Heart right ventricle (tissue), 16 donors: ENCODE measurements at regions of chr6 and their contacts with region 1.

Region 1: DNA sequence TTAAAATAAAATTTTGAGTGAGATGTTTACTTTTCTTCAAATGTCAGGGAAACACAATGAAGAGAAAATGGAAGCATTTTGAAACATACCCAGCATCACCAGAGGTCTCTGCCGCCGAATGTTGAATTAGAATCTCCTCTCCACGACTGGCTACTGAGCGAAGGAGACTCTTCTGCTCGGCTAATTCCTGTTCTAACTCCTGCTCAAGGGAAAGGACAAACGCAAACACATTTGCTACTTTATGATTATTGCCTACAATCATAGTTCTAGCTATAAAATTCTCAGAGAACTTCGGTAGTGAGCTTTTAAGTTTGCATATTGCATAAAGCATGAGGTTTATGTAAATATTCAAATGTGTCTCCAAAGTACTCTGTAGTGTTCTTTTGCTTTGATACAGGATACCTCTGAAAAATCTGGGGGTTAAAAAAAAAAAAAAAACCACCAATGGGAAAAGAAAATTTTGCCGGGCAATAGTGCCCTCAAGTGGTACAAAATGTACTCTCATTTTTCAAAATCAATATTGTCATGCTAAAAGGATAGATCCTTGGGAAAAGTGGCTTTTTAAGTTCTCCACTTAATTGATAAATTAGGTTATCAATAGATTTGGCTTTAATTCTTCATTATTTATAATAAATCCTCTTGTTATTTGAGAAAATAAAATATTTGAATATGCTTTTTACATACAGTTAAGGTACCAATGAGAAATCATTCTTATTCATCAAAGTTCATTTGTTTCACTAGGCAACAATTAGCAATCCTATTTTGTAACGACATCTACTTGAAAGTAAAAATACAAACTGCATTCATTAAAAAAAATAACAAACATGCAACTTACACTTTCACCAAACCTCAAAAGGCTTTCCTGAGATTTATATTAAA is 369.0 kb downstream of the SYNE1 start:
- DNase-seq: no peak
- ATAC-seq: no peak
- H3K4me3 ChIP-seq: no peak overlapping the region
- H3K27ac ChIP-seq: peak overlapping the region in 3 of 10 donors; percentile 8 to 41 (median 34)
- H3K4me1 ChIP-seq: peaks cover 14 to 55% (median 41%) of the 10 kb centered on the region in 9 donors
- H3K27me3 ChIP-seq: no peaks in the 10 kb centered on the region
- CTCF ChIP-seq: peak; percentile 31 to 68 (median 60)

Region 2: GRCh38 chr6:151690768-151691562 is 577.2 kb before region 1 on chr6:
- intact Hi-C with region 1: loop called in 2 of 10 experiments (anchors 5 to 10 kb)
- DNase-seq: no peak
- ATAC-seq: peak in 7 of 8 donors; percentile 64 to 78 (median 72)
- H3K4me3 ChIP-seq: peak overlapping the region in 9 of 10 donors; percentile 10 to 47 (median 41)
- H3K27ac ChIP-seq: peak overlapping the region; percentile 18 to 82 (median 69)
- H3K4me1 ChIP-seq: peaks cover 0 to 27% (median 0%) of the 10 kb centered on the region in 9 donors
- H3K27me3 ChIP-seq: peaks cover 0 to 2% (median 0%) of the 10 kb centered on the region in 7 donors
- CTCF ChIP-seq: no peak

Region 3: GRCh38 chr6:151999194-151999593 is 269.0 kb before region 1 on chr6:
- intact Hi-C with region 1: no loop called
- DNase-seq: no peak
- ATAC-seq: no peak
- H3K4me3 ChIP-seq: no peak overlapping the region
- H3K27ac ChIP-seq: no peak overlapping the region
- H3K4me1 ChIP-seq: no peaks in the 10 kb centered on the region
- H3K27me3 ChIP-seq: no peaks in the 10 kb centered on the region
- CTCF ChIP-seq: no peak

Region 4: GRCh38 chr6:152129691-152130151 is 138.5 kb before region 1 on chr6:
- intact Hi-C with region 1: loop called in 1 of 10 experiments (anchors 10 kb)
- DNase-seq: no peak
- ATAC-seq: peak; percentile 58 to 88 (median 80)
- H3K4me3 ChIP-seq: peak overlapping the region in 9 of 10 donors; percentile 16 to 50 (median 44)
- H3K27ac ChIP-seq: peak overlapping the region; percentile 55 to 88 (median 72)
- H3K4me1 ChIP-seq: peaks cover 4 to 50% (median 26%) of the 10 kb centered on the region in 9 donors
- H3K27me3 ChIP-seq: no peaks in the 10 kb centered on the region
- CTCF ChIP-seq: no peak

Region 5: DNA sequence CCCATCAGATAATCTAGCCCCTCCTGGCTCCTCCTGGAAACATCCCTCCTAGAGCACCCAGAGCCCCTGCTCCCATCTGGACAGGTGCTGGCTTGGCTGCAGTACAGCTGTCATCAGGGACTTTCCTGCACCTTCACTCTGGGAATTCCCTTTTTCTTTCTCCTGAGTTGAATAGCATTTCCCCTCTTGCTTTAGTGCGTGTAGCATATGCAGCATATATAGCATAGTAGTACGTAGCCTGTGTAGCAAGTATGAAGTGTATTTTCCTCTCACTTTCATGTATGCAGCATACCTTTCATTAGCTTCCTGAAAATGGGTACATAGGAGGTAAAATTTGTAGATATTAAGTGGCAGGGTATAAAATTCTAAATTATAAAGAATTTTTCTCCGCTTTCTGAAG is 107.9 kb before region 1 on chr6:
- intact Hi-C with region 1: loop called in 1 of 10 experiments (anchors 10 kb)
- DNase-seq: no peak
- ATAC-seq: no peak
- H3K4me3 ChIP-seq: no peak overlapping the region
- H3K27ac ChIP-seq: peak overlapping the region in 1 of 10 donors; percentile 2
- H3K4me1 ChIP-seq: peaks cover 0 to 4% (median 0%) of the 10 kb centered on the region in 9 donors
- H3K27me3 ChIP-seq: no peaks in the 10 kb centered on the region
- CTCF ChIP-seq: no peak

Region 6: DNA sequence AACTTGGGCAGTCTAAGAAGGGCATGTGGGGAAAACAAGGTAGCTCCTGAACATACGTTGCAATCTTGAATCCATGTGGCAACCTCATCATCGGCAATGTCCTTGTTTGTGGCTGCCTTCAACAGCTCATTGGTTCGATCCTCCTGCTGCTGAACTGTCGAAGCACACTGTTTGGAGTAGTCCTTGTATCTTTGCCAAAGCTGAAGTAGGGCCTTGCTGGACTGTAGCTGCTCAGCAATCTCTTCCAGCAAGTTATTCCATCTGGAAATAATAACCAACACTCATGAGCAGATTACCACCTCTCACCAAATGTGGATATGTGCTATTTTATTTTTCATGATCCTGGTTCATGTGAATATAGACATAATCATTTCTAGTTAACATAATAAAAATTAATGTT is 47.4 kb before region 1 on chr6:
- intact Hi-C with region 1: loop called in 2 of 10 experiments (anchors 5 to 10 kb)
- DNase-seq: peak in 1 of 2 donors; percentile 56
- ATAC-seq: peak; percentile 85 to 96 (median 92)
- H3K4me3 ChIP-seq: no peak overlapping the region
- H3K27ac ChIP-seq: peak overlapping the region in 9 of 10 donors; percentile 15 to 79 (median 64)
- H3K4me1 ChIP-seq: peaks cover 0 to 23% (median 10%) of the 10 kb centered on the region in 9 donors
- H3K27me3 ChIP-seq: no peaks in the 10 kb centered on the region
- CTCF ChIP-seq: no peak

Region 7: DNA sequence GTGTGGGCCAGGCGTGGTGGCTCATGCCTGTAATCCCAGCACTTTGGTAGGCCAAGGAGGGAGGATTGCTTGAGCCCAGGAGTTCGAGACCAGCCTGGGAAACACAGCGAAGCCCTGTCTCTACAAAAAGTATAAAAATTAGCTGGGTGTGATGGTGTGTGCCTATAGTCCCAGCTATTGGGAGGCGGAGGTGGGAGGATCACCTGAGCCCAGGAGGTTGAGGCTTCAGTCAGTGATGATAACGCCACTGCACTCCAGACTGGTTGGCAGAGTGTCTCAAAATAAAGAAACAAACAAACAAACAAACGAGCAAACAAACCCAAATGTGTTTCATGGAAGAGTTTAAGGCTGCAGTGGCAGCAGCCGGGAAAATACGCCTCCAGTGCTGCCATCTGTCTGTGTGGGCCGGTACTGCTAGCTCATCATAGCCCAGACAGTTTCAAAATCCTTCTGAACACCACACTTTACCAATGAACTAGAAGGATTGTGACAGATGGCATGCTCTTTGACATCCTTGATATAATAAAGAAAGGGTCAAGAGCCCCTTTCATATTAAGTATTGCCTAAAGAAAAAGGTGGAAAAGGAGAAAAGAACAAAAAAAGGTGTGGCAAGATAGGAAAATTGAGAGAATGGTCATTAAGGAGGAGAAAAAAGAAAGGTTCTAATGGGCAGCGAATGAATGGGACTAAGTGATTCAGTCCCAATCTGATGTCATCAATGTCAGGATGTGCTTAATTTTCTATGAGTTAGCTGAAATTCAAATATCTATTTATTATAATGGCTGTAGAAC is 70.3 kb after region 1 on chr6:
- intact Hi-C with region 1: no loop called
- DNase-seq: peak; percentile 43 to 60
- ATAC-seq: peak in 7 of 8 donors; percentile 67 to 90 (median 72)
- H3K4me3 ChIP-seq: no peak overlapping the region
- H3K27ac ChIP-seq: no peak overlapping the region
- H3K4me1 ChIP-seq: peaks cover 0 to 14% (median 0%) of the 10 kb centered on the region in 9 donors
- H3K27me3 ChIP-seq: no peaks in the 10 kb centered on the region
- CTCF ChIP-seq: peak; percentile 77 to 95 (median 91)

Region 8: DNA sequence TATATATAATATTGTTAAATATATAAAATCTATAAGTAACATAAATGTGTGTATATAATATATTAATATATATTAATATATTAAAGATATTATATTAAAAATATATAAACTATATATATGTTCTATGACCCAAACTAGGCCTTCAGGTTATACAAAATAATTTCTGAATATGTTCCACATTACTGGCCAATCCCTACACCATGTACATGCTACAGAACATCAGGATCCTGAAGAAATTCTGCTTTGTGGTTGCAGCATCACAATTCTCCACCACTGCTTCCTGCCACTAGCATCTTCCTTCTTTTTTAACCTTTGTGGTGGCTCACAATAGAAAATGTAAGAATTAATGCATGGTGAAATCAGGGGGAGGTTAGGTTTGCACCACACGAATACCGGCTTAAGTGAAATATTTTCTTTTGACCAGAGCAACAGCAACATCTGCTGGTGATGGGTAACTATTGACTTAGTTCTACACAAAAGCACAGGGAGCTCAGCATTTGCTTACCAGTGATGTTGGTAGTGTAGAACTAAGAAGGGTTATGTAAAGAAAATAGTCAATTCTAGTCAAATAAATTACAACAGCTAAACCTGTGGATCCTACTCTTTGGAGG is 88.3 kb after region 1 on chr6:
- intact Hi-C with region 1: no loop called
- DNase-seq: no peak
- ATAC-seq: peak in 4 of 8 donors; percentile 25 to 63 (median 53)
- H3K4me3 ChIP-seq: no peak overlapping the region
- H3K27ac ChIP-seq: no peak overlapping the region
- H3K4me1 ChIP-seq: peaks cover 0 to 14% (median 4%) of the 10 kb centered on the region in 9 donors
- H3K27me3 ChIP-seq: no peaks in the 10 kb centered on the region
- CTCF ChIP-seq: peak in 8 of 9 donors; percentile 4 to 47 (median 37)